HepG2 (cell line): ENCODE measurements at regions of chr4 and their contacts with region 1.

Region 1: DNA sequence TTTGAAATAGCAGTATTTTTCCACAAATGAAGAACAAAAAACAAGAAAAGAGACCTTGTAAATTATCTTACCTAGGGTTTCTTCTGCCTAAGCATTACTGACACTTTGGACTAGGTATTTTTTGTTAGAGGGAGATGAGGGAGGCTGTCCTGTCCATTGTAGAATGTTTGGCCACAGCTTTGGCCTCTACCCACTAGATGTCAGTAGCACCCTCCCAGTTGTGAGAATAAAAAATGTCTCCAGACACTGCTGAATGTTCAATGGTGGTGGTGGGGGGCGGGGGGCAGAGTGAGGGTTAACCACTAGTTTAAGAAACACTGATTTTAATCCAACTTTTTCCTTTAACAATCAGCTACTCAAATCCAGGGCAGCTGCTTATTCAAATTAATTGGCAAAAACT is 25.8 kb downstream of the OTUD4 start:
- DNase-seq: peak; percentile 31
- ATAC-seq: peak; percentile 87
- H3K4me3 ChIP-seq: no peak overlapping the region
- H3K27ac ChIP-seq: no peak overlapping the region
- H3K4me1 ChIP-seq: no peaks in the 10 kb centered on the region
- H3K27me3 ChIP-seq: no peaks in the 10 kb centered on the region
- CTCF ChIP-seq: peak; percentile 59
- EP300 ChIP-seq: no peak
- POLR2A ChIP-seq: no peak
- RAD21 ChIP-seq: no peak

Region 2: DNA sequence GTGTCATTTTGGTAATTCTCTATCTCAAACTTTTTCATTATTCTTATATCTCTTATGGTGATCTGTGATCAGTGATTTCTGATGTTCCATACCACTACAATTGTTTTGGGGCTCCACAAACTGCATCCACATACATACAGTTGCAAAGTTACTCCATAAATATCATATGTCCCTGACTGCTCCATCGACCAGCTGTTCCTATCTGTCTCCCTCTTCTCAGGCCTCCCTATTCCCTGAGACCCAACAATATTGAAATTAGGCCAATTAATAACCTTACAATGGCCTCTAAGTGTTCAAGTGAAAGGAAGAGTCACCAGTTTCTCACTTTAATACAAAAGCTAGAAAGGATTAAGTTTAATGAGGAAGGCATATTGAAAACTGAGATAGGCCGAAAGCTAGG is 165.3 kb before region 1 on chr4:
- CTCF ChIA-PET with region 1: no interaction called
- POLR2A ChIA-PET with region 1: no interaction called
- in situ Hi-C with region 1: no loop called
- intact Hi-C with region 1: no loop called
- DNase-seq: no peak
- ATAC-seq: no peak
- H3K4me3 ChIP-seq: no peak overlapping the region
- H3K27ac ChIP-seq: no peak overlapping the region
- H3K4me1 ChIP-seq: no peaks in the 10 kb centered on the region
- H3K27me3 ChIP-seq: no peaks in the 10 kb centered on the region
- CTCF ChIP-seq: no peak
- EP300 ChIP-seq: no peak
- POLR2A ChIP-seq: no peak
- RAD21 ChIP-seq: no peak

Region 3: DNA sequence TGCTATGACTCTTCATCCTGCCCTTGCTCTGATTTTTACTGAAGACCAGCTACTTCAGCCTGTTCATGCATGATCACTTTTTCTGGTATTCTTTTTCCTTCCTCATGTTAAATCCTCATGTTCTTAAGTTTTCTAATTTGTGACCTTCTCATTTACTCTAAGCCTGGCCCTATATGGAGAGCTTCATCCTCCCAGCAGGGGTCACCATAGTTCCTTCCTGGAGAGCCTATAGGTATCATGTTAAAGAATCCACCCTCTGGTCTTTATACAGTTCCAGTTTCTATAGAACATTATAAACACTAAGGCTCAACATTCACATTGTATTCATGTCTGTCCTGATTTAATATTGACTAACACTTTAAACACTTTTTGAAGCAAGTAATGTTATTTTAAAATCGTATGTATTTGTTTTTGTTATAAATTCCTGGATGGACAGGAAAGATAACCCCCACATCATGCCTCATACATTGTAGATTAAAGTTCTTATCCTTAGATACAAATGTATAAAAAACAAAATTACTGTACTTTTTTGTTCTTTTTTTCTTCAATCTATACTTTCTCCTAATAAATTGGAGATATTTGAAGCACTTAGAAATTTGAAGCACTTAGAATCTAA is 79.6 kb after region 1 on chr4:
- CTCF ChIA-PET with region 1: no interaction called
- POLR2A ChIA-PET with region 1: no interaction called
- in situ Hi-C with region 1: no loop called
- intact Hi-C with region 1: loop called (anchors 1 kb)
- DNase-seq: peak; percentile 61
- ATAC-seq: peak; percentile 99
- H3K4me3 ChIP-seq: no peak overlapping the region
- H3K27ac ChIP-seq: no peak overlapping the region
- H3K4me1 ChIP-seq: no peaks in the 10 kb centered on the region
- H3K27me3 ChIP-seq: no peaks in the 10 kb centered on the region
- CTCF ChIP-seq: peak; percentile 79
- EP300 ChIP-seq: no peak
- POLR2A ChIP-seq: no peak
- RAD21 ChIP-seq: peak; percentile 77

Region 4: GRCh38 chr4:145248971-145249370 is 94.4 kb after region 1 on chr4:
- CTCF ChIA-PET with region 1: no interaction called
- POLR2A ChIA-PET with region 1: no interaction called
- in situ Hi-C with region 1: no loop called
- intact Hi-C with region 1: no loop called
- DNase-seq: no peak
- ATAC-seq: no peak
- H3K4me3 ChIP-seq: no peak overlapping the region
- H3K27ac ChIP-seq: no peak overlapping the region
- H3K4me1 ChIP-seq: no peaks in the 10 kb centered on the region
- H3K27me3 ChIP-seq: peaks cover 0 to 13% of the 10 kb centered on the region in 2 experiments; a peak in 1 of 5 replicates
- CTCF ChIP-seq: no peak
- EP300 ChIP-seq: no peak
- POLR2A ChIP-seq: no peak
- RAD21 ChIP-seq: no peak

Region 5: DNA sequence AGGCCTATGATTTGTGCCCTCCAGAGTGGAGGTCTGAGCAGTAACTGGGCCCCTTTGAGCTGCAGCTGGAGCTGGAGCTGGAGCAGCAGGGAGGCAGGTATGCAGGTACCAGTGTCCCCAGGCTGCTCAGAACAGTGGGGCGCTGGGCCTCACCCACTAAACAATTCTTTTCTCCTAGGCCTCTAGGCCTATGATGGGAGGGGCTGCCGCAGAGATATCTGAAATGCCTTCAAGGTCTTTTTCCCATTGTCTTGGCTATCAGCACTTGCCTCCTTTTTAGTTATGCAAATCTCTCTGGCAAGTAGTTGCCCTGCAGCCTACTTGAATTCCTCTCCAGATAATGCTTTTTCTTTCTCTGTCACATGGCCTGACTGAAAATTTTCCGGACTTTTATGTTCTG is 105.5 kb after region 1 on chr4:
- CTCF ChIA-PET with region 1: no interaction called
- POLR2A ChIA-PET with region 1: no interaction called
- in situ Hi-C with region 1: no loop called
- intact Hi-C with region 1: no loop called
- DNase-seq: no peak
- ATAC-seq: no peak
- H3K4me3 ChIP-seq: no peak overlapping the region
- H3K27ac ChIP-seq: no peak overlapping the region
- H3K4me1 ChIP-seq: no peaks in the 10 kb centered on the region
- H3K27me3 ChIP-seq: no peaks in the 10 kb centered on the region; a peak in 1 of 5 replicates
- CTCF ChIP-seq: no peak
- EP300 ChIP-seq: no peak
- POLR2A ChIP-seq: no peak
- RAD21 ChIP-seq: no peak

Region 6: GRCh38 chr4:145609481-145610427 is 455.2 kb after region 1 on chr4:
- CTCF ChIA-PET with region 1: interaction called, 3 read pairs
- POLR2A ChIA-PET with region 1: no interaction called
- in situ Hi-C with region 1: no loop called
- intact Hi-C with region 1: loop called (anchors 1 kb)
- DNase-seq: peak; percentile 58
- ATAC-seq: peak; percentile 67
- H3K4me3 ChIP-seq: no peak overlapping the region
- H3K27ac ChIP-seq: no peak overlapping the region
- H3K4me1 ChIP-seq: no peaks in the 10 kb centered on the region
- H3K27me3 ChIP-seq: no peaks in the 10 kb centered on the region
- CTCF ChIP-seq: peak; percentile 78
- EP300 ChIP-seq: no peak
- POLR2A ChIP-seq: no peak
- RAD21 ChIP-seq: peak; percentile 57; the same call in 1 of the 2 replicates